Dorsolateral prefrontal cortex (tissue), 120 donors: ENCODE measurements at regions of chr11 and their contacts with region 1.

Region 1: GRCh38 chr11:18731949-18732821 is 6.2 kb upstream of the IGSF22 start:
- DNase-seq: peak in 9 of 10 donors; percentile 59 to 83 (median 74)
- H3K4me3 ChIP-seq: no peak overlapping the region
- H3K27ac ChIP-seq: peak overlapping the region in 1 of 59 donors; percentile 19
- H3K27me3 ChIP-seq: peaks cover 0 to 18% (median 0%) of the 10 kb centered on the region in 45 donors
- CTCF ChIP-seq: peak; percentile 82 to 98 (median 95)

Region 2: GRCh38 chr11:18540207-18541009 is 191.8 kb before region 1 on chr11:
- intact Hi-C with region 1: loop called in 1 of 2 experiments (anchors 10 kb)
- DNase-seq: no peak
- H3K4me3 ChIP-seq: no peak overlapping the region
- H3K27ac ChIP-seq: peak overlapping the region in 5 of 59 donors; percentile 11 to 38 (median 24)
- H3K27me3 ChIP-seq: no peaks in the 10 kb centered on the region
- CTCF ChIP-seq: peak in 54 of 56 donors; percentile 18 to 66 (median 46)